ENCODE measurements at regions of chr21 and their contacts with region 1.

Region 1: GRCh38 chr21:32392880-32393676 is at the start of gene URB1:
- DNase-seq: peak; percentile 87
- H3K4me3 ChIP-seq: peak within 1 kb of the TSS; percentile 75 to 79 (median 78)
- H3K27ac ChIP-seq: peak within 1 kb of the TSS; percentile 62
- H3K4me1 ChIP-seq: peaks cover 13% of the 10 kb centered on the region
- H3K27me3 ChIP-seq: no peaks in the 10 kb centered on the region
- CTCF ChIP-seq: no peak
- POLR2A ChIP-seq: peak; percentile 92
- total RNA-seq, gene URB1: 21.4 and 27.3 TPM in 2 replicates

Region 2: DNA sequence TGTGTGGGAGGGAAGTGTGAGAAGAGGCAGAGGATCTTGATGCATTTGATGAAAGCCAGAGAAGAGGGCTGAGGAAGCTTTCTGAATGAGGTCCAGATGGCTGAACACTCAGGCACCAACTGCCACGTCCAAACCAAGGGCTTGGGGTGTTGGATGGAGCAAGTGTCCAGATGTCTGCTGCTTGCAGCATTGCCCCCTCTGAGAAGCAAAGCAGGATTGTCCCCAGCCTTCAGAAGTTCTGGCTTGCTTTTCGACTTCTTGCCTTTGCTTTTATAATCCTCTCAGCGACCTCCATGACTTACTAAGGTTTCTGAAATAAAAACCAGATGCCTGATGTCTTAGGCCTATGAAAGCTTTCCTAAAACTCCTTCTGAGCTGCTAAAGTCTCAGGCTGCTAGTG is 337.8 kb before region 1 on chr21:
- CTCF ChIA-PET with region 1: no interaction called
- POLR2A ChIA-PET with region 1: no interaction called
- dilution Hi-C with region 1: no loop called
- intact Hi-C with region 1: no loop called
- DNase-seq: no peak
- H3K4me3 ChIP-seq: no peak overlapping the region
- H3K27ac ChIP-seq: no peak overlapping the region
- H3K4me1 ChIP-seq: no peaks in the 10 kb centered on the region
- H3K27me3 ChIP-seq: no peaks in the 10 kb centered on the region
- CTCF ChIP-seq: no peak
- POLR2A ChIP-seq: no peak

Region 3: DNA sequence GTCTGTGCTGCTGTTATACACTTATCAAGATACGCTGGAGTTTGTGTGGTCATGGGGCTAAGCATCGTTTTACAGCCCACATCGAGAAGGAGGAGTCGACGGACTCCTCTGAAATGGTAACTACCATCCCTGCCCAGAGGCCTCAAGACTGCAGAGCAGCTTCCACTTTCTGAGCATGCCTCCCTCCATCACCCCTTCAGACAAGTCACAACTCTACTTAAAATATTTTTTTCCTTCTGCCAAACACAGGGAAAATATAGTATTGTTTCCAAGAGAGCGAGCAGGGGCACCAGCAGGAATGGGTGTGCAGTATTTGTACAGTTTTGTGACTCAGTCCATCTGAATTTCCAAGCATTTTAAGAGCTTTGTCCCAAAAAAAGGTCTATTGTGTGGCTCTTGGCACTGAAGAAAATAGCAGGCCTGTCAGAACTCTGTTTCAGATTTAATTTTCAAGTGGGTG is 33.5 kb after region 1 on chr21:
- CTCF ChIA-PET with region 1: no interaction called
- POLR2A ChIA-PET with region 1: no interaction called
- dilution Hi-C with region 1: no loop called
- intact Hi-C with region 1: loop called (anchors 1 kb)
- DNase-seq: peak; percentile 73
- H3K4me3 ChIP-seq: no peak overlapping the region
- H3K27ac ChIP-seq: peak overlapping the region; percentile 68
- H3K4me1 ChIP-seq: peaks cover 34% of the 10 kb centered on the region
- H3K27me3 ChIP-seq: no peaks in the 10 kb centered on the region
- CTCF ChIP-seq: no peak
- POLR2A ChIP-seq: no peak

Region 4: GRCh38 chr21:32437729-32438128 is 44.7 kb after region 1 on chr21:
- CTCF ChIA-PET with region 1: no interaction called
- POLR2A ChIA-PET with region 1: no interaction called
- dilution Hi-C with region 1: no loop called
- intact Hi-C with region 1: no loop called
- DNase-seq: peak; percentile 93
- H3K4me3 ChIP-seq: no peak overlapping the region
- H3K27ac ChIP-seq: peak overlapping the region; percentile 23
- H3K4me1 ChIP-seq: peaks cover 22% of the 10 kb centered on the region
- H3K27me3 ChIP-seq: no peaks in the 10 kb centered on the region
- CTCF ChIP-seq: no peak
- POLR2A ChIP-seq: no peak

Measured in endothelial cell of umbilical vein (primary cell).